Activated CD4-positive, alpha-beta T cell treated with anti-CD3 and anti-CD28 coated beads for 36 hours (primary cell): ENCODE measurements at regions of chr14 and their contacts with region 1.

Region 1: GRCh38 chr14:68955164-68955921 is 23.8 kb downstream of the ACTN1 start:
- DNase-seq: no peak
- ATAC-seq: no peak
- H3K4me3 Mint-ChIP-seq: no peak overlapping the region
- H3K27ac Mint-ChIP-seq: peak overlapping the region; percentile 37
- H3K4me1 Mint-ChIP-seq: peaks cover 82% of the 10 kb centered on the region
- H3K27me3 Mint-ChIP-seq: no peaks in the 10 kb centered on the region

Region 2: GRCh38 chr14:68970038-68970612 is 14.8 kb after region 1 on chr14:
- CTCF ChIA-PET with region 1: interaction called, 4 read pairs
- POLR2A ChIA-PET with region 1: interaction called, 3 read pairs
- intact Hi-C with region 1: loop called (anchors 2 kb)
- DNase-seq: peak; percentile 31
- ATAC-seq: peak; percentile 40
- H3K4me3 Mint-ChIP-seq: peak overlapping the region; percentile 12
- H3K27ac Mint-ChIP-seq: peak overlapping the region; percentile 94
- H3K4me1 Mint-ChIP-seq: peaks cover 81% of the 10 kb centered on the region
- H3K27me3 Mint-ChIP-seq: no peaks in the 10 kb centered on the region